Naive thymus-derived CD4-positive, alpha-beta T cell (primary cell): ENCODE measurements at regions of chr13 and their contacts with region 1.

Region 1: DNA sequence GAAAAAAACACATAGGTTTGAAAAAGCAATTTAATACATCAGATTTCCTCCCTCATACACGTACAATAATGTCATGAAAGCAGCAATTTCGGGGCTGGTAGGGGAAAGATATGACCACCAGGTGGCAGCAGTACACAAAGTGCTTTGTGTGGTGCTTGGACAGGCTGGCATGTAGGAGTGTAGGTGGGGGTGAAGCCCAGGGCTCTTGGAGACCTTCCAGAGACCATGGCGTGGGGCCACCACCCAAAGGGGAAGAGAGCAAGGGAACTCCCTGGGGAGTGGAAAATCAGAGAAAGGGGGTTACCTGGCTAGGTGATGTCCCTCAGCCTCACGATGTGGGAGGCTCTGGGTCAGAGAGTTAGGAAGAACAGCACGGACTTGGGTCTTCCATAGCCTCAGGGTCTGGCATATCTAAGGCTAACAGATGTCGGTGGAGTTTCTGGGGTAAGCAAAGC is 11.8 kb upstream of the CCNA1 start:
- DNase-seq: peak in 8 of 9 donors; percentile 15 to 69 (median 52)
- ATAC-seq: peak; percentile 85
- H3K4me3 ChIP-seq: no peak overlapping the region
- H3K4me3 Mint-ChIP-seq: peak overlapping the region in 1 of 10 donors; percentile 51
- H3K27ac ChIP-seq: no peak overlapping the region
- H3K27ac Mint-ChIP-seq: peak overlapping the region in 1 of 9 donors; percentile 54
- H3K4me1 ChIP-seq: no peaks in the 10 kb centered on the region
- H3K4me1 Mint-ChIP-seq: peaks cover 0 to 41% (median 0%) of the 10 kb centered on the region in 7 donors
- H3K27me3 ChIP-seq: no peaks in the 10 kb centered on the region
- H3K27me3 Mint-ChIP-seq: peaks cover 16 to 71% (median 61%) of the 10 kb centered on the region in 5 donors

Region 2: DNA sequence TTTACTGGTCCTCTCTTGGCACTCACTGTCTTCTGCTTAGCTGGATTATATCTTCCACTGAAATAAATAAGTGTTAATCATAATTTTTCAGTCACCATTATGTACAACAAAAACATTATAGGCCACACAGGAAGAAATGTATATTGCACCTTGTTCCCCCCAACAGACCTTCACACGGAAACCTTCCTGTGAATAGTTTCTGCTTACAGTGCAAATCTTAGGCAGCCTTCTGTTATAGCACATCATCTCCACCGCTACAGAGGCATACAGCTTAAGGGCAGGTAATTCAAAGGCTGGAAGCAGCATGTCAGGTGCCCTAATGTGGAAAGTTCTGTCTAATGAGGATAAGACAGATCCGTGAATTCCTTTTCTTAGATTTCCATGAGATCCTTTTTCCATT is 189.2 kb before region 1 on chr13:
- CTCF ChIA-PET with region 1: no interaction called
- POLR2A ChIA-PET with region 1: no interaction called
- intact Hi-C with region 1: no loop called
- DNase-seq: no peak
- ATAC-seq: no peak
- H3K4me3 ChIP-seq: no peak overlapping the region
- H3K4me3 Mint-ChIP-seq: no peak overlapping the region
- H3K27ac ChIP-seq: no peak overlapping the region
- H3K27ac Mint-ChIP-seq: no peak overlapping the region
- H3K4me1 ChIP-seq: no peaks in the 10 kb centered on the region
- H3K4me1 Mint-ChIP-seq: no peaks in the 10 kb centered on the region
- H3K27me3 ChIP-seq: no peaks in the 10 kb centered on the region
- H3K27me3 Mint-ChIP-seq: peaks cover 0 to 7% (median 4%) of the 10 kb centered on the region in 5 donors

Region 3: GRCh38 chr13:36431654-36432511 is 11.4 kb after region 1 on chr13 and contains the start of gene CCNA1:
- CTCF ChIA-PET with region 1: no interaction called
- POLR2A ChIA-PET with region 1: no interaction called
- intact Hi-C with region 1: loop called in 1 of 2 experiments (anchors 1 kb)
- DNase-seq: peak in 1 of 9 donors; percentile 67
- ATAC-seq: peak; percentile 21
- H3K4me3 ChIP-seq: no peak within 1 kb of the TSS
- H3K4me3 Mint-ChIP-seq: peak within 1 kb of the TSS; percentile 51 to 73 (median 67)
- H3K27ac ChIP-seq: no peak within 1 kb of the TSS
- H3K27ac Mint-ChIP-seq: peak within 1 kb of the TSS in 1 of 9 donors; percentile 68
- H3K4me1 ChIP-seq: no peaks in the 10 kb centered on the region
- H3K4me1 Mint-ChIP-seq: peaks cover 0 to 29% (median 15%) of the 10 kb centered on the region in 7 donors
- H3K27me3 ChIP-seq: peaks cover 0 to 15% of the 10 kb centered on the region in 2 donors
- H3K27me3 Mint-ChIP-seq: peaks cover 62 to 79% (median 72%) of the 10 kb centered on the region in 5 donors
- total RNA-seq, gene CCNA1: 0.22 to 5.0 (median 0.69) TPM in 3 of 5 experiments, not detected in the others

Region 4: GRCh38 chr13:36736119-36736726 is 315.8 kb after region 1 on chr13:
- CTCF ChIA-PET with region 1: no interaction called
- POLR2A ChIA-PET with region 1: no interaction called
- intact Hi-C with region 1: loop called (anchors 1 kb)
- DNase-seq: peak in 7 of 9 donors; percentile 3 to 43 (median 22)
- ATAC-seq: no peak
- H3K4me3 ChIP-seq: no peak overlapping the region
- H3K4me3 Mint-ChIP-seq: no peak overlapping the region
- H3K27ac ChIP-seq: no peak overlapping the region
- H3K27ac Mint-ChIP-seq: no peak overlapping the region
- H3K4me1 ChIP-seq: no peaks in the 10 kb centered on the region
- H3K4me1 Mint-ChIP-seq: no peaks in the 10 kb centered on the region
- H3K27me3 ChIP-seq: no peaks in the 10 kb centered on the region
- H3K27me3 Mint-ChIP-seq: peaks cover 0 to 4% (median 0%) of the 10 kb centered on the region in 5 donors

Region 5: DNA sequence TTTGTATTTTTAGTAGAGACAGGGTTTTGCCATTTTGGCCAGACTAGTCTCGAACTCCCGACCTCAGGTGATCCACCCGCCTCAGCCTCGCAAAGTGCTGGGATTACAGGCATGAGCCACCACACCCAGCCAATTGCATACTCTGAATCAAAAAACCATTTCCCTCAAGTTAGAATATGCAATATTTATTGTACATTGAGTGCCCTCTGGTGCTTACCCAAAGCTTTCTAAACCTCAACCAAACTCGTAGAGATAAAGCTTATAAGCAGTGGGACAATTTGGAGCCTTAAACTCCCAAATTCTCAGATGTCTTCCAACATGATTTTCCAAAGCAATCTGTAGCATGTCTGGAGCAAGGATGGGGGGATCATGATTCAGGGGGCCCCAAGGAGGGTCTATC is 420.9 kb after region 1 on chr13:
- CTCF ChIA-PET with region 1: interaction called, 3 read pairs
- POLR2A ChIA-PET with region 1: no interaction called
- intact Hi-C with region 1: loop called in 1 of 2 experiments (anchors 1 kb)
- DNase-seq: no peak
- ATAC-seq: no peak
- H3K4me3 ChIP-seq: no peak overlapping the region
- H3K4me3 Mint-ChIP-seq: no peak overlapping the region
- H3K27ac ChIP-seq: no peak overlapping the region
- H3K27ac Mint-ChIP-seq: no peak overlapping the region
- H3K4me1 ChIP-seq: no peaks in the 10 kb centered on the region
- H3K4me1 Mint-ChIP-seq: no peaks in the 10 kb centered on the region
- H3K27me3 ChIP-seq: no peaks in the 10 kb centered on the region
- H3K27me3 Mint-ChIP-seq: no peaks in the 10 kb centered on the region

Region 6: GRCh38 chr13:36872621-36873020 is 452.2 kb after region 1 on chr13:
- CTCF ChIA-PET with region 1: no interaction called
- POLR2A ChIA-PET with region 1: no interaction called
- intact Hi-C with region 1: no loop called
- DNase-seq: no peak
- ATAC-seq: no peak
- H3K4me3 ChIP-seq: no peak overlapping the region
- H3K4me3 Mint-ChIP-seq: no peak overlapping the region
- H3K27ac ChIP-seq: no peak overlapping the region
- H3K27ac Mint-ChIP-seq: no peak overlapping the region
- H3K4me1 ChIP-seq: no peaks in the 10 kb centered on the region
- H3K4me1 Mint-ChIP-seq: no peaks in the 10 kb centered on the region
- H3K27me3 ChIP-seq: no peaks in the 10 kb centered on the region
- H3K27me3 Mint-ChIP-seq: peaks cover 12 to 36% (median 17%) of the 10 kb centered on the region in 5 donors

Region 7: GRCh38 chr13:36999054-36999714 is 578.7 kb after region 1 on chr13 and contains the start of gene ALG5:
- CTCF ChIA-PET with region 1: no interaction called
- POLR2A ChIA-PET with region 1: no interaction called
- intact Hi-C with region 1: loop called in 1 of 2 experiments (anchors 5 kb)
- DNase-seq: peak; percentile 91 to 99 (median 96)
- ATAC-seq: peak; percentile 85
- H3K4me3 ChIP-seq: peak within 1 kb of the TSS; percentile 77
- H3K4me3 Mint-ChIP-seq: peak within 1 kb of the TSS; percentile 90 to 100 (median 98)
- H3K27ac ChIP-seq: peak within 1 kb of the TSS; percentile 89
- H3K27ac Mint-ChIP-seq: peak within 1 kb of the TSS; percentile 98 to 100 (median 100)
- H3K4me1 ChIP-seq: peaks cover 12 to 21% of the 10 kb centered on the region in 2 donors
- H3K4me1 Mint-ChIP-seq: peaks cover 23 to 54% (median 46%) of the 10 kb centered on the region in 7 donors
- H3K27me3 ChIP-seq: no peaks in the 10 kb centered on the region
- H3K27me3 Mint-ChIP-seq: peaks cover 0 to 7% (median 0%) of the 10 kb centered on the region in 5 donors
- total RNA-seq, gene ALG5: 12.1 to 39.3 (median 22.8) TPM